A673 (cell line): ENCODE measurements at regions of chr2 and their contacts with region 1.

Region 1: DNA sequence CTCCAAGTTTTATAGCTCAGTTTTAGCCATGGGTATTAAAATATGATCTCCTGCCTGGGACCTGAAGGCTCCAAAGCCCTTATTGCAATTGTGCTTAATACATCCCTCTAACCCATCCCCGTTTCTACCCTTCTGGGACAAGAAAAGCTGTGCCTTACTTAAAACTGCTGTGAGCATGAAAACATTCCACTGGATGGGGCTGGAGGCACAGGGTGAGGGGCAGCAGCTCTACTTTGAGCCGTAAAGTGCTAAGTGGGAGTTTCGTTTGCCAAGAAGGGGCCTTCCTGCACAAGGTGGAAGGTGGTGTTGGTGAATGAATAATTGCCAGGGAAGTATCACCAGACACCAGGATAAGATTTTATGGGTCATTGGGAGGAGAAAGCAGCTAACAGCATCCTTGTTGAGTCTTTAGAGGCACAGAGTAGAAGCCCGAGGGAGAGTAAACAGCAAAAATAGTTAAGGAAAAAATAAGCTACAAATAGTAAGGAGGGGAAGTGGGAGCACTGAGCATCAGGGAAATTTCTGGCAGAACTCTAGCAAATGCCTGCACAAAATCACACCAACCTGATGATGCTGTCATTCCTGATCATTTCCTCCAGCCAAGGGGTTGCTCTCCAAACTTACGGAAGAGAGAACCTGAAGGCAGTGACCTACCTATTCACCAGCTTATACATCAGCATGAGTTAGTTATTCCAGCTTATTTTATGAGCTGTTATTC is 218.4 kb downstream of the MREG start:
- DNase-seq: peak; percentile 72
- H3K4me3 ChIP-seq: no peak overlapping the region
- H3K27ac ChIP-seq: peak overlapping the region; percentile 72
- H3K4me1 ChIP-seq: peaks cover 54% of the 10 kb centered on the region
- H3K27me3 ChIP-seq: no peaks in the 10 kb centered on the region
- CTCF ChIP-seq: peak; percentile 50

Region 2: DNA sequence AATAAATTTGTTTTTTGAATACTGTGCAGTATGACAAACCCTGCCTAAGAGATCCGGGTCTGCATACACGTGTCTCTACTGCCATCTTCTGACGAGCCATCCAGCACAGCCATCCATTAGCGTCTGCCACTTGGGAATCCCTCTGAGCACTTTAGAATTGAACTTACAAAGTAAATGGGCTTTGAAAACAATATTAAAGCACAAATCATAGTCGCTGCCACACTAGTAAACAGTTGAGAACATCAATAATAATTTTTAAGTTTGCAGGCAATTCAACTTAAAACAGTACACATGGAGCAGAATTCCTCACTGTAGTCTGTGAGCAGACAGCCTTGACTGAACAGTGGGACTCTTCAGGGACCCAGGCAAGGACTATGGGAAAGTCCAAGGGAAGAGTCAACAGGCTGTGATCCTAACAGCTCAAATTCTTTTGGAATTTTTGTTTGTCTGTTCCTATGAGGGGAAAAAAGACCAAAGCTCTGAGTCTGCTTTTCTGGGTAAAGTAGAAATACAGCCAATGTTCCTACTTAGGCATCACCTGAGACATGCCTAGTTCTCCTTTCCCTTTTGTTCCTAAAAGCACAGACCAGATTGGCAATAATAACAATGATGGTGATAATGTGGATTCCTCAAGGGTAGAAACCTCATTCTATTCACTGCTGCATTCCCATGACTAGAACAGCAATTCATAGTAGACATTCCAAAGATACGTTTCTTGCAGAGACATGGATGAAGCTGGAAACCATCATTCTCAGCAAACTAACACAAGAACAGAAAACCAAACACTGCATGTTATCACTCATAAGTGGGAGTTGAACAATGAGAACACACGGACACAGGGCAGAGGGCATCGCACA is 125.5 kb after region 1 on chr2:
- CTCF ChIA-PET with region 1: no interaction called
- POLR2A ChIA-PET with region 1: no interaction called
- intact Hi-C with region 1: loop called (anchors 1 kb)
- DNase-seq: peak; percentile 89
- H3K4me3 ChIP-seq: no peak overlapping the region
- H3K27ac ChIP-seq: peak overlapping the region; percentile 81
- H3K4me1 ChIP-seq: peaks cover 26% of the 10 kb centered on the region
- H3K27me3 ChIP-seq: no peaks in the 10 kb centered on the region
- CTCF ChIP-seq: peak; percentile 92